G401 (cell line): ENCODE measurements at regions of chr1 and their contacts with region 1.

Region 1: GRCh38 chr1:227185291-227185690 is 133.0 kb downstream of the CDC42BPA start:
- DNase-seq: no peak

Region 2: GRCh38 chr1:227111782-227112181 is 73.5 kb before region 1 on chr1:
- in situ Hi-C with region 1: loop called (anchors 10 kb)
- DNase-seq: no peak

Region 3: GRCh38 chr1:228378090-228378872 is 1193.0 kb after region 1 on chr1:
- in situ Hi-C with region 1: no loop called
- DNase-seq: peak; percentile 61